Activated naive CD4-positive, alpha-beta T cell treated with anti-CD3 and anti-CD28 coated beads, Interleukin-2, amount 10 ng/mL, durations not matched to agents 7 days and 5 days (primary cell): ENCODE measurements at regions of chr19 and their contacts with region 1.

Region 1: GRCh38 chr19:19170053-19170872 is at the start of gene MEF2B:
- DNase-seq: peak; percentile 91
- H3K4me3 Mint-ChIP-seq: no peak within 1 kb of the TSS
- H3K27ac Mint-ChIP-seq: no peak within 1 kb of the TSS
- H3K4me1 Mint-ChIP-seq: peaks cover 14% of the 10 kb centered on the region
- H3K27me3 Mint-ChIP-seq: peaks cover 21% of the 10 kb centered on the region

Region 2: GRCh38 chr19:19053508-19054314 is 116.6 kb before region 1 on chr19:
- CTCF ChIA-PET with region 1: interaction called, 15 read pairs
- DNase-seq: peak; percentile 74
- H3K4me3 Mint-ChIP-seq: no peak overlapping the region
- H3K27ac Mint-ChIP-seq: no peak overlapping the region
- H3K4me1 Mint-ChIP-seq: no peaks in the 10 kb centered on the region
- H3K27me3 Mint-ChIP-seq: no peaks in the 10 kb centered on the region

Region 3: DNA sequence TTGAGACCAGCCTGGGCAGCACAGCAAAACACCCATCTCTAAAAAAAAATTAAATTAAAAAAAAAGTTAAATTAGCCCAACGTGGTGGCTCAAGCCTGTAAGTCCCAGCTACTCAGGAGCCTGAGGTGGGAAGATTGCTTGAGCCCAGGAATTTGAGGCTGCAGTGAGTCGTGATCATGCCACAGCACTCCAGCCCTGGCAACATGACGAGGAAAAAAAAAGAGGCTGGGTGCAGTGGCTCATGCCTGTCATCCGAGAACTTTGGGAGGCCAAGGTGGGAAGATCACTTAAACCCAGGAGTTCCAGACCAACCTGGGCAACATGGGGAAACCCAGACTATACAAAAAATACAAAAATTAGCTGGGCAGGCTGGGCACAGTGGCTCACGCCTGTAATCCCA is 29.8 kb before region 1 on chr19:
- CTCF ChIA-PET with region 1: interaction called, 44 read pairs
- DNase-seq: no peak
- H3K4me3 Mint-ChIP-seq: no peak overlapping the region
- H3K27ac Mint-ChIP-seq: no peak overlapping the region
- H3K4me1 Mint-ChIP-seq: peaks cover 28% of the 10 kb centered on the region
- H3K27me3 Mint-ChIP-seq: peaks cover 26% of the 10 kb centered on the region

Region 4: GRCh38 chr19:19155495-19156219 is 14.6 kb before region 1 on chr19:
- CTCF ChIA-PET with region 1: interaction called, 21 read pairs
- DNase-seq: no peak
- H3K4me3 Mint-ChIP-seq: no peak overlapping the region
- H3K27ac Mint-ChIP-seq: peak overlapping the region; percentile 16
- H3K4me1 Mint-ChIP-seq: no peaks in the 10 kb centered on the region
- H3K27me3 Mint-ChIP-seq: no peaks in the 10 kb centered on the region

Region 5: GRCh38 chr19:19185853-19186740 is 15.8 kb after region 1 on chr19:
- CTCF ChIA-PET with region 1: interaction called, 16 read pairs
- DNase-seq: peak; percentile 78
- H3K4me3 Mint-ChIP-seq: no peak overlapping the region
- H3K27ac Mint-ChIP-seq: no peak overlapping the region
- H3K4me1 Mint-ChIP-seq: peaks cover 29% of the 10 kb centered on the region
- H3K27me3 Mint-ChIP-seq: no peaks in the 10 kb centered on the region

Region 6: DNA sequence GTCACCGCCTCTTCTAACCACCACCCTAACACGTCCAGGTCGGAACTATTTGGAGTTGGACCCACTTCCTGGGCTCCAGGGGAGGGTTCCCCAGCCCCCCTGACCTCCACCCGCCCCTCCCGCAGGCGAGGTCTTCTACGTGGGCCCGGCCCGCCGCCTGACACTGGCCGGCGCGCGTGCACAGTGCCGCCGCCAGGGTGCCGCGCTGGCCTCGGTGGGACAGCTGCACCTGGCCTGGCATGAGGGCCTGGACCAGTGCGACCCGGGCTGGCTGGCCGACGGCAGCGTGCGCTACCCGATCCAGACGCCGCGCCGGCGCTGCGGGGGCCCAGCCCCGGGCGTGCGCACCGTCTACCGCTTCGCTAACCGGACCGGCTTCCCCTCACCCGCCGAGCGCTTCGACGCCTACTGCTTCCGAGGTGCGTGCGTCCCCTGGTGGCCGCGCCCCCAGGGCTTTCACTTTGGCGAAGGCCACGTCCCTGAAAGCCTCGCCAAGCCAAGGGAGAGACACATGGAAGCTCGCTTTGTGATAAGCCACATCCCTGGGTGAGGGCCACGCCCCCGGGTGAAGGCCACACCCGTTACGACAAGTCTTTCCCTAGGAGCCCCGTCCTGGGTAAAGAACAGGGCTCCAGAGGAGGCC is 54.7 kb after region 1 on chr19:
- CTCF ChIA-PET with region 1: interaction called, 13 read pairs
- DNase-seq: peak; percentile 88
- H3K4me3 Mint-ChIP-seq: peak overlapping the region; percentile 68
- H3K27ac Mint-ChIP-seq: no peak overlapping the region
- H3K4me1 Mint-ChIP-seq: peaks cover 4% of the 10 kb centered on the region
- H3K27me3 Mint-ChIP-seq: peaks cover 55% of the 10 kb centered on the region